ENCODE measurements at regions of chr7 and their contacts with region 1.

Region 1: DNA sequence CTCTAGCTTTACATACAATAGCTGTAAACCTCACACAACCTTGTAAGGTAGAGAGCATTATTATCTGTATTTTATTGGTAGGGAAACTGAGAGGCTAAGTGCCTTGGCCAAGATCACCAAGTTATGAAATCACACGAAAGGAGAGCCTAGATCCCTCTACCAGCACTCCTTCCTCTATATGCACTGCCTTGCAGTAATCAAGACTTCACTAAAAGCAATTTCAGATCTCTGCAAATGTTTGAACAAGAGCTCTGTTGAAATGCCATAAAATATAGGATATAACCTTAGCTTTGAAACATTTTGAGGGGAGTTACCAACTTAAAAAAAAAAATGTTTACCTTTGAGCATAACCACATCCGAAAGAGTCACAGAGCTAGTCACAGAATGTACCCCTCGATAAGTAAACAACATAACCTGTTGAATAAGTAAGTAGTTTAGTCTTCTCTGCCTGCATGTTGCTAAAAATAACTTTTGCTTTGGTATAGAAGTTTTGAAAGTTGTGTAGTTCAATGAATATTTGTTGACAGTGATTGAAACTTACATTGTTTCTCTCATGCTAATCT is 709.4 kb downstream of the AUTS2 start:
- DNase-seq: no peak
- H3K4me3 ChIP-seq: no peak overlapping the region
- H3K27ac ChIP-seq: no peak overlapping the region
- H3K4me1 ChIP-seq: peaks cover 4% of the 10 kb centered on the region
- H3K27me3 ChIP-seq: no peaks in the 10 kb centered on the region
- CTCF ChIP-seq: no peak

Region 2: GRCh38 chr7:68564306-68565135 is 1743.1 kb before region 1 on chr7:
- CTCF ChIA-PET with region 1: no interaction called
- POLR2A ChIA-PET with region 1: no interaction called
- intact Hi-C with region 1: no loop called
- DNase-seq: no peak
- H3K4me3 ChIP-seq: no peak overlapping the region
- H3K27ac ChIP-seq: no peak overlapping the region
- H3K4me1 ChIP-seq: peaks cover 16% of the 10 kb centered on the region
- H3K27me3 ChIP-seq: no peaks in the 10 kb centered on the region
- CTCF ChIP-seq: no peak

Region 3: DNA sequence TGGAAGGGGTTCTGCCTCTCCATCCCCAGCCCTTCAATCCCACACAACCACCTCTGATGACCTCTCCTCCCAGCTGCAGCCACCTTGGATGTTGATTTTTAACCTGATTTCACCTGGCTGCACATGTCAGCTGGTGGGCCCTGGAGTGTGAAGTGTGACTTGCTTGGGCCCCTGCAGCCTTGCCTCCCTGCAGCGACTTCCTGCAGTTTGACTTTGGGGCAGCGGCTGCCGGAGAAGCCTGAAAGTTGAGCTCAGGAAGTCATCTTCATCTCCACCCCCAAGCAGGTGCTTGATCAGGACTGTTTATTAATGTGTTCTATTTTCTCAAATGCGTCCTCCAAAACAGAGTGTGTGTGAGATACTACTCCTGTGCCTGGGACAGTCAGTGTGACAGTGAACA is 149.1 kb after region 1 on chr7:
- CTCF ChIA-PET with region 1: no interaction called
- POLR2A ChIA-PET with region 1: no interaction called
- intact Hi-C with region 1: loop called (anchors 10 kb)
- DNase-seq: no peak
- H3K4me3 ChIP-seq: no peak overlapping the region
- H3K27ac ChIP-seq: no peak overlapping the region
- H3K4me1 ChIP-seq: no peaks in the 10 kb centered on the region
- H3K27me3 ChIP-seq: no peaks in the 10 kb centered on the region
- CTCF ChIP-seq: no peak